ENCODE measurements at regions of chr9 and their contacts with region 1.

Region 1: GRCh38 chr9:73357607-73358006 is 205.9 kb downstream of the ANXA1 start:
- DNase-seq: no peak
- ATAC-seq: no peak
- H3K4me3 ChIP-seq: no peak overlapping the region
- H3K27ac ChIP-seq: no peak overlapping the region
- H3K4me1 ChIP-seq: no peaks in the 10 kb centered on the region
- H3K27me3 ChIP-seq: no peaks in the 10 kb centered on the region
- CTCF ChIP-seq: no peak

Region 2: DNA sequence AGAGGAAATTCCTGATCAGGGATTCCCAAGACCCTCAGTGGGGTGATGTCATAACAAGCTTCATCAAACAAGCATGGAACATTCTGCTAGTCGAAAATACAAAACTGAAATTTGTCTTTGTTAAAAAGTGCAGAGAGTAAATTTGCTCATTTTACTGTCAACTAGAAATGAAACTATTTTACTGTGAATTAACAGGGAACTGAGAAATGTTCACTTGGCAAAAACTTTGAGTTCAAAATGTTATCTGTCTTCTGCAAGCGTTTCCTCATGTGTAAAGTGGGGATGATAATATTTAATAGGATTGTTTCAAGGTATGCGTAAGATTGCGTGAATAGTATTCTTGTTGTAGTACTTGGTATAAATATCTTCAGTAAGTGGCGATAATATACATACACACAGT is 450.2 kb before region 1 on chr9:
- intact Hi-C with region 1: no loop called
- DNase-seq: no peak
- ATAC-seq: no peak
- H3K4me3 ChIP-seq: no peak overlapping the region
- H3K27ac ChIP-seq: peak overlapping the region in 1 of 10 donors; percentile 17
- H3K4me1 ChIP-seq: peaks cover 0 to 11% (median 0%) of the 10 kb centered on the region in 9 donors
- H3K27me3 ChIP-seq: no peaks in the 10 kb centered on the region
- CTCF ChIP-seq: no peak

Region 3: DNA sequence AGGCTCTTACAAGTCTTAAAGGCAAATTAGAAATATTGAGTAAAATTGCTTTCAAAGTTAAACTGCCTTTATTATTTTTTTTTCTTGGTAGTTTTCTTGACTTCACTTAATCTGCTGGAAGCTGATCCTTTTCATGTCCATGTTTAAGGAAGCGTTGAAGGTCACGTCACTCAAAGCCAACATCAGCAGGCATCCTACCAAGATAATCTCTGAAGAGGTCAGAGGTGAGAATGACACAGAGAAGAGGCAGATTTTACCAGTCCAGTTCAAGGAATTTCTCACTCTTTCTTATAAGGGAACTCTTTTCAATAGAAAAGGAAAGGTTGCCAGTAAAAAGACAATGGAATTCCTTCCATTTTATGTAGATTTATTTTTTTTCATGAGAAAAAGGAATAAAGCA is 53.9 kb after region 1 on chr9:
- intact Hi-C with region 1: loop called in 1 of 10 experiments (anchors 10 kb)
- DNase-seq: no peak
- ATAC-seq: no peak
- H3K4me3 ChIP-seq: no peak overlapping the region
- H3K27ac ChIP-seq: no peak overlapping the region
- H3K4me1 ChIP-seq: peaks cover 0 to 3% (median 0%) of the 10 kb centered on the region in 9 donors
- H3K27me3 ChIP-seq: no peaks in the 10 kb centered on the region
- CTCF ChIP-seq: no peak

Region 4: GRCh38 chr9:73527521-73527920 is 169.9 kb after region 1 on chr9:
- intact Hi-C with region 1: no loop called
- DNase-seq: no peak
- ATAC-seq: no peak
- H3K4me3 ChIP-seq: no peak overlapping the region
- H3K27ac ChIP-seq: no peak overlapping the region
- H3K4me1 ChIP-seq: no peaks in the 10 kb centered on the region
- H3K27me3 ChIP-seq: no peaks in the 10 kb centered on the region
- CTCF ChIP-seq: no peak